Common myeloid progenitor, CD34-positive (primary cell): ENCODE measurements at regions of chr7 and their contacts with region 1.

Region 1: DNA sequence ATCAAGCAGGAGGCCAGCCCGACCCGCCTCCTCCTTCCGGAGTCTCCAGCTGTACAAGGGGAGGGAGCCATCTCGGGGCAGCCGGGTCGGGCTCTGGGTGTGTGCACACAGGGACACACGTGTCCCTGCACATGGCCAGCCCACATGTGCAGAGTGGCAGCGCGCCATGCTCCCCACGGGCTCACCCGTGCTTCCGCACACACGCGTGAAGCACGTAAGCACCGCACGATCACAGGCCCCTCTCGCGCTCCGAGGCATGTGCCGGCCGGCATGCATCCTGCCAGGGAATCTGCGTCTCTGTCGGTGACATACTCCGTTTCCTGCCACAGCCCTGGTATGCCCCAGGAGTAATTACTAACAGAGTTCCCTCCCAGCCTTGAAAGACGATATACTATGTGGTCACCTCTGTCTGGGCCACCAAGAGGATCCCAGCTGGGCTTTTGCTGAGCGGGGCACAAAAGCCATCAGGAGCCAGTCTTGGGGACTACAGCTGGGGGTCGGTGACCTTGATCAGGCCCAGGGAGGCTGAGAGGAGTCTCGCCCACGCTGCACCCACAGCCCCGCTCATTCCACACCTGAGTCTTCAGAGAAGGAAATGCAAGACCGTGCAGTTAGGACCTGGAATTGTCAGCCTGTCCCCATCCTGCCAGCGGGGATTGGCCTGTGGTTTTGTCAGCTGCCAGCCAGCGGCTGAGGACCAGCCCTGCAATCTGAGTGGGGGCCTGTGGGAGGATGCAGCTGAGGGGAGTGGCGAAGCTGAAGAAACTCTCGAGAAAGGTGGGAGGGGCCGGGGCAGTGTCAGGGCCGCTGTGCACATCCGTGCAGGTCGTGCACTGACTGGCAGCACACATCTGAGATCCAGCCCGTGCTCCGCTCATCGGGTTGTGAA is 11.0 kb upstream of the LFNG start:
- DNase-seq: peak; percentile 73 to 94 (median 89)
- H3K4me3 ChIP-seq: peak overlapping the region in 3 of 7 experiments; percentile 27 to 49 (median 39)
- H3K27ac ChIP-seq: no peak overlapping the region
- H3K4me1 ChIP-seq: peaks cover 3 to 71% (median 63%) of the 10 kb centered on the region in 4 experiments
- H3K27me3 ChIP-seq: no peaks in the 10 kb centered on the region

Region 2: DNA sequence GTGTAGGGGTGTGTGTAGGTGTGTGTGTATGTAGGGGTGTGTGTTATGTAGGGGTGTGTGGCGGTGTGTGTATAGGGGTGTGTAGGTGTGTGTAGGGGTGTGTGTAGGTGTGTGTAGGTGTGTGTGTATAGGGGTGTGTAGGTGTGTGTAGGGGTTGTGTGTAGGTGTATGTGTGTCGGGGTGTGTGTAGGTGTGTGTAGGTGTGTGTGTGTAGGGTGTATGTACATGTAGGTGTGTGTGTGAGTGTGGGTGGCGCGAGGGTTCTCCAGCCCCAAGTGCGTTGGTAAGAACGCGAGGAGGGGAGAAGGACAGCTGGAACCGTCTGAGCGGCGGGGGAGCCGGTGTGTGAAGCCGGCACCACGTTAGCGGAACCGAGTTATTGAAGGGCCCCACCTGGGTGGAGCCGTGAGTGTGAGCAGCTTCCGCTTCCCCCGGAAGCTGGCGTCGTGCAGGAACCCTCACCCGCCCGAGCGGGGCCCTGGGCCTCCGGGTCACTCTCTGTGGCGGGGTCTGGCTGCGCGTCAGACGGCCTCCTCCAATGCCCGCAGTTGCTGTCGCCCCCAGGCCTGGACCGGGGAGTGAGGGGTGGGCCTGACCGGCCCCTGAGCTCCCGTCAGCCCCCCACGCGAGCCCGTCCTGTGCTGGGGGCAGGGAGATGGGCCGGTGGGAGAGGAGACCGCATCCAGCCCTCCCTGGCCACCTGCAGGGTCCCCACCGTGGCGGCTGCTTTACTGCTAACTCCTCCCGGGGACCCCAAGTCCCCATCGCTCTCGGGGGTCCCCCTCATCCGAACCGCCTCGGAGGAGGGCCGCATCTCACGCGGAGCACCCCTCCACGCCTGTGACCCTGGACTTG is 889.2 kb before region 1 on chr7:
- CTCF ChIA-PET with region 1: no interaction called
- POLR2A ChIA-PET with region 1: no interaction called
- DNase-seq: peak in 1 of 3 donors; percentile 34
- H3K4me3 ChIP-seq: no peak overlapping the region
- H3K27ac ChIP-seq: no peak overlapping the region
- H3K4me1 ChIP-seq: no peaks in the 10 kb centered on the region
- H3K27me3 ChIP-seq: peaks cover 0 to 3% (median 0%) of the 10 kb centered on the region in 5 experiments

Region 3: DNA sequence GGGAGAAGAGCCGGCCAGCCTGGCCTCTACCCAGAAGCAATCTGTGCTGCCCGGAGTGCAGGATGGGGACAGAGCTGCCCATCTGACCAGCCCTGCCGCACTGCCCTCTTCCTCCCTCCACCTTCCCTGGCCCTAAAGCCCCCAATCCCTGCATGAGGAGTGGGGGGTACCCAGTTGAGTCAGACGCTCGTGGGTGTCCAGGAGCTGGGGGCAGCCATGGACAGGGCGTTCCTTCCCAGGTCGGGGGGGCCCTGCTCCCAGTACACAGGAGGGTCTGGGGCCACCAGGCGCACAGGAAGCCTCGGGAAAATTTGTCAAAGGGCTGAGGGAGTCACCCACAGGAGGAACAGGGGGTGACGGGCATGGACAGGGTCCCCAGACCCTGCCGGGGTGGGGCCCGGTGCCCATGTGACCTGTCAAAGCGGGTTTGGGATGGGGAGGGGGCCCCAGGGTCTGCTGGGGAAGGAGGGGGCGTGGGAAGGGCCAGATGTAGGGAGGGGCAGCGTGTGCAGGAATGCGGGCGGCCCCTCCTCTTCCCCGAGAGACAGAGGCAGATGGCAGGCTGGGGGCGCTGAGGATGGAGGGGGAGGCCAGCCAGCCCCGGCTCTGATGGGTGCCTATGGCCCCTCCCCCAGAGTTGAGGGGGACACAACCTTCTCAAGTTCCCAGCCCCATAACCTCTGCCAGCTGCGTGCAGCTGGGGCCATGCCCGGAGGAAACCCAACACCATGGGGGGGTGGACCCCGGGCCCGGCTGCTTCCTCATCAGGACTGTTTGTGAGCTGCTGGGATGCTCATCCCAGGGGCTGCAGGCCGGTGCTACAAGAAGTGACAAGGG is 10.9 kb before region 1 on chr7:
- CTCF ChIA-PET with region 1: interaction called, 10 read pairs
- POLR2A ChIA-PET with region 1: interaction called, 10 read pairs
- DNase-seq: peak; percentile 22 to 83 (median 79)
- H3K4me3 ChIP-seq: peak overlapping the region in 2 of 7 experiments; percentile 26 to 33
- H3K27ac ChIP-seq: no peak overlapping the region
- H3K4me1 ChIP-seq: peaks cover 0 to 36% (median 30%) of the 10 kb centered on the region in 4 experiments
- H3K27me3 ChIP-seq: no peaks in the 10 kb centered on the region

Region 4: DNA sequence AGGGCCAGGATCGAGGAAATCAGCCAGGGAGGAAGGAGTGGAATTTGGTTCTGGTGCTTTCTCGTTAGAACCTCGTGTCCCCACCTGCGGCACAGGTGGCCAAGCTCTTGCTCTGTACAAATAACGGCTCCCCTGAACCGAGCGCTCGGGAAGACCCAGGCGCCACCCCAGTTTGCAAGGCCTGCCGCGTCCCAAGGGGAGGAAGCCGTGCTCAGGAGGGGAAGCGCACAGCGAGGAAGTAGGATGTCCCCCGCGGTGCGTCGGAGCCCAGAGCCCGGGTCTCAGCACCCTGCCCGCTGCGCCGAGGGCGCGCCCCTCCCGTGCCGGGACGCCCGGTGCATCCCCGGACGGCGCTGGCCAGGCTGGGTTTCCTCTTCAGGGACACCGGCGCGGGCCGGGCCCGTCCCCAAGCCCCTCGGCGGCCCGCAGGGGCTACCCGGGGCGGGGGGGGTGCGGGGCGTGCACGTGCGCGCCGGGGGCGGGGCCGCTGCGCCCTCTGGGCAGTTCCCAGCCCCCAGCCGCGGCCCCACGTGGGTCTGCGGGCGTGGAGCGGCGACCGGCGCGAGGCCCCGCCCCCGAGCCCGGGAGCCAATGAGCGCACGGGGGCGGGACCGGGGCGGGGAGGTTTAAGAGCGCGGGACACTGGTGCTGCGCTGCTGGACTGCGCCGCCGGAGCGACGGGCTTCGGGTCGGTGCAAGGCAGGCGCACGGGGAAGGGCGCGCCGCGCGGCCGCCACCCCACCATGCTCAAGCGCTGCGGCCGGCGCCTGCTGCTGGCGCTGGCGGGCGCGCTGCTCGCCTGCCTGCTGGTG is 10.8 kb after region 1 on chr7 and contains the start of gene LFNG:
- CTCF ChIA-PET with region 1: interaction called, 22 read pairs
- POLR2A ChIA-PET with region 1: interaction called, 13 read pairs
- DNase-seq: peak; percentile 76 to 85 (median 80)
- H3K4me3 ChIP-seq: peak within 1 kb of the TSS; percentile 22 to 78 (median 71)
- H3K27ac ChIP-seq: no peak within 1 kb of the TSS
- H3K4me1 ChIP-seq: peaks cover 5 to 72% (median 63%) of the 10 kb centered on the region in 4 experiments
- H3K27me3 ChIP-seq: peaks cover 0 to 4% (median 0%) of the 10 kb centered on the region in 5 experiments

Region 5: GRCh38 chr7:2529161-2530070 is 20.8 kb after region 1 on chr7:
- CTCF ChIA-PET with region 1: interaction called, 22 read pairs
- POLR2A ChIA-PET with region 1: interaction called, 28 read pairs
- DNase-seq: peak; percentile 88 to 97 (median 96)
- H3K4me3 ChIP-seq: peak overlapping the region in 5 of 7 experiments; percentile 27 to 66 (median 50)
- H3K27ac ChIP-seq: peak overlapping the region; percentile 68 to 87
- H3K4me1 ChIP-seq: peaks cover 6 to 71% (median 66%) of the 10 kb centered on the region in 4 experiments
- H3K27me3 ChIP-seq: no peaks in the 10 kb centered on the region

Region 6: DNA sequence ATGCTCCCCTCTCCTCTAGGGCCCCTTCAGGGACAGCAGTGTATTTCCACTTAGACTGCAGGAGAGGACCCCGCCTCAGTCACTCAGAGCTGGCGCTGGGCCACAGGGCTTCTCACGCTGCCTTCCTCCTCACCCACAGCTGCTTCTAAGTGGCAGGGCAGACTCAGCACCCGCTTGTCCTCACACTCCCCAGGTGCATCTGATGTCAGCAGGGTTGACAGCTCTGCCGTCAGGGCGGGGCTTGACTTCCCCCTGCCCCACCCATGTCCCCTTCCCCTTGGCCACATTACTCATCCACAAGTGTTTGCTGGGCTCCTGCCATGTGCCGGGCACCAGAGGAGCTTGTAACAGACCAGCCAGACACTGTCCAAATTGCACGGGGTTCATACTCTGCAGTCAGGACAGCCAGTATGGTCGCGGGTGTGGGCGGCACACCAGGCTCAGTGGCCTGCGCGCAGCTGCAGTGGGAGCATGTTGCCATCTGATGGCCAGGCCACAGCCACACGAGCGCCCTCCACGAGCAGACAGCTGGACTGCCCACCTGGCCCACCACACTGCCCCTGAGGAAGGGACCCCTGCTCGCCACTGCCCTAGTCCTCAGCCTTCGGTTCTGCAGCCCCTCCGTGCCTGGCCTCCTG is 94.0 kb after region 1 on chr7:
- CTCF ChIA-PET with region 1: no interaction called
- POLR2A ChIA-PET with region 1: no interaction called
- DNase-seq: peak; percentile 38 to 69 (median 60)
- H3K4me3 ChIP-seq: no peak overlapping the region
- H3K27ac ChIP-seq: no peak overlapping the region
- H3K4me1 ChIP-seq: peaks cover 0 to 20% (median 15%) of the 10 kb centered on the region in 4 experiments
- H3K27me3 ChIP-seq: no peaks in the 10 kb centered on the region